Activated CD8-positive, alpha-beta T cell treated with anti-CD3 and anti-CD28 coated beads, Interleukin-2, amount 10 ng/mL, durations not matched to agents 7 days and 5 days (primary cell): ENCODE measurements at regions of chr4 and their contacts with region 1.

Region 1: DNA sequence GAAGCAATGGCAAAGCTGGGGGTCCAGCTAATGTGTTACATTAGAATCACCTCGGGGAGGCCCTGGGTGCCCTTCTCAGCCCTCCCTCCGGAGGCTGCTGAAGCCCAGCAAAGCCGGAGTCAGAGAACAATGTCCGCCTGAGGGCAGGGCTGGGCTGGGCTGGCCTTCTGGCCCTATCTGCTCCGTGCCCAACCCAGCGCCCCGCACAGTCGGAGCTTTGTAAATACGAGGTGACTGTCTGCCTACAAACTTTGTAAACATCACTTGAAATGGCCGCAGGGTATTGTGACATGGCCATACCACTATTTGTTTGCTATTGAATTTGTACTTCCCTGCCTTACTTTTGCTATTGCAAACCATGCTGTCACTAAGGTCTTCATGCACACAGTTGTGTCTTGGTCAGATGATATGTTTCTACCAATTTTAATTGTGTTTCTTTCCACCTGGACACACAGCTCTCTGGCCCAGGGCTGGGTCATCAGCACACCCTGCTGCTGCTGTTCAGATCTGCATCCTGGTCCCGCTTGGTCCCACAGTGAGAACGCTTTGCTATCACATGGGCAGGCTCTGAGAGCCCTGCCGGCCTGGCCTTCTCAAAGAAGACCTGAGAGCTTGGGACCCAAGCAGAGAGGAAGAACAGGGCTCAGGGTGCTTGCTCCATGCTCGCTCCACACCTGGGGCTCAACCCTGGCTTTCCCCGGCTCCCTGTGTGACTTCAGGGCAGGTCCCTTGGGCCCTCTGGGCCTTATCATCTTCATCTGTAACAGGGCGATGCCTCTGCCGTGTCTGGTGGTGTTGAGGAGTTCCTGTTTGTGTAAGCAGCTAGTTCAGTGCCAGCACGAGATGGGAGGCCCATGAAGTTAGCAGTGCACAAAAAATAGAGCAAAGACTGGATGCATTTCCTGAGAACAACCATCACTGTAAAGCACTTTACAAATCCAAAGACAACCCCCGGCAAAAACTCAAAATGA is 2.3 kb downstream of the S100P start:
- DNase-seq: peak; percentile 72
- ATAC-seq: peak; percentile 77
- H3K4me3 Mint-ChIP-seq: peak overlapping the region; percentile 73
- H3K27ac Mint-ChIP-seq: peak overlapping the region; percentile 96
- H3K4me1 Mint-ChIP-seq: peaks cover 88% of the 10 kb centered on the region
- H3K27me3 Mint-ChIP-seq: no peaks in the 10 kb centered on the region

Region 2: DNA sequence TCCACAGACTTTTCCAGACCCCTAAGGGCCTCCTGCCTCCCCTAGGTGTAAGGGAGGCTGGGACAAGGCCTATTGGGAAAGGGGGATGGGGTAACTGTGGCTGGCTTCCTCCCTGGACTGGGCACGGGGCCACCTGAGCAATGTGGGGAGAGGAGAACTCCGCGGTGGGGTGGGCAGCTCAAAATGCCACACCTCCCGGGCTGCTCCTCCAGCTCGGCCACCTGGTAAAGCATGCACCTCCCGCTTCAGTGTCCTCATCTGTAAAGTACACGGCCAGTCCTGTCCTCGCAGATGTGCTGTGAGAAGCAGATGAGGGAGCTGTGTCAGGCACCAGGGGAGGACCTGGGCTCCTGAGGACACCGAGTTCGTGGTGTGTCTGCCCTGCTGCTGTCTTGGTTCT is 76.5 kb before region 1 on chr4:
- CTCF ChIA-PET with region 1: no interaction called
- POLR2A ChIA-PET with region 1: no interaction called
- DNase-seq: no peak
- ATAC-seq: no peak
- H3K4me3 Mint-ChIP-seq: no peak overlapping the region
- H3K27ac Mint-ChIP-seq: no peak overlapping the region
- H3K4me1 Mint-ChIP-seq: no peaks in the 10 kb centered on the region
- H3K27me3 Mint-ChIP-seq: no peaks in the 10 kb centered on the region

Region 3: GRCh38 chr4:6709230-6710114 is 13.5 kb after region 1 on chr4 and contains the start of gene MRFAP1L1:
- CTCF ChIA-PET with region 1: interaction called, 38 read pairs
- POLR2A ChIA-PET with region 1: interaction called, 37 read pairs
- DNase-seq: peak; percentile 98
- ATAC-seq: peak; percentile 84
- H3K4me3 Mint-ChIP-seq: peak within 1 kb of the TSS; percentile 99
- H3K27ac Mint-ChIP-seq: peak within 1 kb of the TSS; percentile 95
- H3K4me1 Mint-ChIP-seq: peaks cover 51% of the 10 kb centered on the region
- H3K27me3 Mint-ChIP-seq: no peaks in the 10 kb centered on the region
- total RNA-seq, gene MRFAP1L1: 65.5 to 67.4 TPM

Region 4: DNA sequence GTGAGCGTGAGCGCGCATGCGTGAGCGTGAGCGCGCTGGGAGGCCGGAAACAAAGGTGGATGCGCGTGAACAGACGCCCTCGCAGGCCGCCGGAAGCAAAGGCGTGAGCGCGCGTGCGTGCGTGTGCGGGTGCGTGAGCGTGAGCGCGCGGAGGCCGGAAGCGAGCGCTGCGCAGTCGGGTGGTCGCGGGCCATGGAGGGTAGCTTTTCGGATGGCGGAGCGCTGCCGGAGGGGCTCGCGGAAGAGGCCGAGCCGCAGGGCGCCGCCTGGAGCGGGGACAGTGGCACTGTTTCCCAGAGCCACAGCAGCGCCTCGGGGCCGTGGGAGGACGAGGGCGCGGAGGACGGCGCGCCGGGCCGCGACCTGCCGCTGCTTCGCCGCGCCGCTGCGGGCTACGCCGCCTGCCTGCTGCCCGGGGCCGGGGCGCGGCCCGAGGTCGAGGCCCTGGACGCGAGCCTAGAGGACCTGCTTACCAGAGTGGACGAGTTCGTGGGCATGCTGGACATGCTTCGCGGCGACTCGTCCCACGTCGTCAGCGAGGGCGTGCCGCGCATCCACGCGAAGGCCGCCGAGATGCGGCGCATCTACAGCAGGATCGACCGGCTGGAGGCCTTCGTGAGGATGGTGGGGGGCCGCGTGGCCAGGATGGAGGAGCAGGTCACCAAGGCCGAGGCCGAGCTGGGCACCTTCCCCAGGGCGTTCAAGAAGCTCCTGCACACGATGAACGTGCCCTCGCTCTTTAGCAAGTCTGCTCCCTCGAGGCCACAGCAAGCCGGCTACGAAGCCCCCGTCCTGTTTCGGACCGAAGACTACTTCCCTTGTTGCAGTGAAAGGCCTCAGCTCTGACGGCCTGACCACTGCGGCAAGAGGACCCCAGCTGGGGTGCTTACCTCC is 20.3 kb after region 1 on chr4 and contains the start of gene BLOC1S4:
- CTCF ChIA-PET with region 1: interaction called, 17 read pairs
- POLR2A ChIA-PET with region 1: interaction called, 25 read pairs
- DNase-seq: peak; percentile 92
- ATAC-seq: peak; percentile 83
- H3K4me3 Mint-ChIP-seq: peak within 1 kb of the TSS; percentile 91
- H3K27ac Mint-ChIP-seq: peak within 1 kb of the TSS; percentile 97
- H3K4me1 Mint-ChIP-seq: peaks cover 35% of the 10 kb centered on the region
- H3K27me3 Mint-ChIP-seq: no peaks in the 10 kb centered on the region
- total RNA-seq, gene BLOC1S4: 19.6 to 21.5 TPM

Region 5: GRCh38 chr4:6727081-6727942 is 31.4 kb after region 1 on chr4:
- CTCF ChIA-PET with region 1: no interaction called
- POLR2A ChIA-PET with region 1: no interaction called
- DNase-seq: no peak
- ATAC-seq: no peak
- H3K4me3 Mint-ChIP-seq: no peak overlapping the region
- H3K27ac Mint-ChIP-seq: no peak overlapping the region
- H3K4me1 Mint-ChIP-seq: peaks cover 7% of the 10 kb centered on the region
- H3K27me3 Mint-ChIP-seq: no peaks in the 10 kb centered on the region